Activated CD4-positive, alpha-beta T cell treated with anti-CD3 and anti-CD28 coated beads, Interleukin-2, amount 10 ng/mL, durations not matched to agents 7 days and 5 days (primary cell): ENCODE measurements at regions of chr6 and their contacts with region 1.

Region 1: DNA sequence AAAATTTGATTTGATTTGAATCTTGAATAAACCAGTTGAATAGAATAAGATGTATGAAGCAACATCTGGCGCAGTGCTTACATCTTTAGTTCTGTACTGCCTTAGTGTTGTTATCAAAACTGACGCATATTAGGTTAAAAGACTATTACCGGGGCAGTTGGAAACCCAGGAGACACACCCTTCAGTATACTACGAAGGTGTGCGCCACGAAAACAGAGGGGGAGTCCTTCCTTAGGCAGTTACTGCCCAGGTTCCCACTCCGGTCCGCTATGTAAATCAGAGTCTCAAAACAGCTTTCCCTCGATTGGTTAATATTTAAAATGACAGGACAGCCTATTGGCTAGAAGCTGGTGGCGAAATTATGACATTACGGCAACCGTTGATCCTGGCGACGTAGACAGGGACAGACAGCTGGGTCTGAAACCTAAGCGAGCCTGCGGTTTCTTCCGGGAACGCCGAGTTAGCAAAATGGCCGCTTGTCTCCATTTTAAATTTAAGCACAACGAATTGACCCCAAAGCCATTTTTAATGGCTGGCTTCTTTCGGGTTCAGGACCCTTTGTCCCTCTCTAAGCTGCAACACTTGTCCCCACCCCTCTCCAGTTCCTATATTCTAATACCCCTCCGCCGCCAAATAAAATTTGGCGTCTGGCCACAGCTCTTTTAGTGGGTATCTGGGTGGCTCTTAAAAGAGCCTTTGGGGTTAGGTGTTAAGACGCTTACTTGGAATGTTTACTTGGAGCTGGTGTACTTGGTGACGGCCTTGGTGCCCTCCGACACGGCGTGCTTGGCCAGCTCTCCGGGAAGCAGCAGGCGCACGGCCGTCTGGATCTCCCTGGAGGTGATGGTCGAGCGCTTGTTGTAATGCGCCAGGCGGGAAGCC is 35.8 kb downstream of the HFE start:
- DNase-seq: peak; percentile 98
- H3K4me3 Mint-ChIP-seq: peak overlapping the region; percentile 100
- H3K27ac Mint-ChIP-seq: peak overlapping the region; percentile 99
- H3K4me1 Mint-ChIP-seq: peaks cover 35% of the 10 kb centered on the region
- H3K27me3 Mint-ChIP-seq: peaks cover 4% of the 10 kb centered on the region

Region 2: DNA sequence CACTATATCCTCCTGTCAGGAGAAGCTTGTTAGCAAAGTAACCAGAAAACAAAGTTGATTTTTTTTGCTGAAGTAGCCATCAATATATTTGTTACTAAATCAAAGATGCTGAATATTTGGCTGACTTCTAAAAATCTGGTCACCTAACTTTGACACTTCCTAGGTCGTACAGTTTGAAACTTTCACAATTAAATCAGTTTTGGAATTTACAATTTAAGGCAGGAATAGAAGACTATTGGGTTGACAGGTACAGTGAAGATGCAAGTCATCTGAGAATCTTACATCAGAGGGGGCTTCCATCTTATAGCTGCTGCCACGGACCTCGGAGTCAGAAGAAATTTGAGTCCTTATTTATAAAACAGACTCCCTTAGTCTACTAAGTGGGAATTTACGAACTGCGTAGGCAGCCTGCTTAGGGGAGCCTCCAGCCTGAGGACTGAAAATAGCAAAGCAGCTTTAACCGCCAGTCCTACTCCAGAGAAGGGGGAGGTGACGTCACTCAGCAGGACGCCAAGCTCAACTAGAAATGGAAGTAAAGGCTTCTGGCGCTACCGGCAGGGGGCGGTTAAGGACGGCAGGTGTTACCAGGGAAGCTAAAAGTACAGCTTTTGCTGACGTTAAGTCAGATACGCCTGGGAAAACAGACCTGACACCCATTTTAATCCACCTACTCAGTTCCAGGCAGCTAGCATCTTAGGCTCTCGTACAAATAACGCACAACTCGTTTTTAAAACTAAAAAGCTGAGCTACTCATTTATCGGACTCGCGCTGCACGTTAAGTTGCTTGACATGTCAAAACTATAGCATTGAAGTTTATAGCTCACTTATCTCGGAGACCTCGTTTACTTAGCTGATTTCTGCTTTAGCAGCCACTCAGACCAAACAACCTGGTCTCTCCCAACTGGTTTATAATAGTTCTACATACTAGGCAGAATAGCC is 96.9 kb before region 1 on chr6:
- CTCF ChIA-PET with region 1: interaction called, 9 read pairs
- POLR2A ChIA-PET with region 1: interaction called, 59 read pairs
- DNase-seq: peak; percentile 96
- H3K4me3 Mint-ChIP-seq: peak overlapping the region; percentile 88
- H3K27ac Mint-ChIP-seq: peak overlapping the region; percentile 100
- H3K4me1 Mint-ChIP-seq: peaks cover 86% of the 10 kb centered on the region
- H3K27me3 Mint-ChIP-seq: peaks cover 3% of the 10 kb centered on the region

Region 3: DNA sequence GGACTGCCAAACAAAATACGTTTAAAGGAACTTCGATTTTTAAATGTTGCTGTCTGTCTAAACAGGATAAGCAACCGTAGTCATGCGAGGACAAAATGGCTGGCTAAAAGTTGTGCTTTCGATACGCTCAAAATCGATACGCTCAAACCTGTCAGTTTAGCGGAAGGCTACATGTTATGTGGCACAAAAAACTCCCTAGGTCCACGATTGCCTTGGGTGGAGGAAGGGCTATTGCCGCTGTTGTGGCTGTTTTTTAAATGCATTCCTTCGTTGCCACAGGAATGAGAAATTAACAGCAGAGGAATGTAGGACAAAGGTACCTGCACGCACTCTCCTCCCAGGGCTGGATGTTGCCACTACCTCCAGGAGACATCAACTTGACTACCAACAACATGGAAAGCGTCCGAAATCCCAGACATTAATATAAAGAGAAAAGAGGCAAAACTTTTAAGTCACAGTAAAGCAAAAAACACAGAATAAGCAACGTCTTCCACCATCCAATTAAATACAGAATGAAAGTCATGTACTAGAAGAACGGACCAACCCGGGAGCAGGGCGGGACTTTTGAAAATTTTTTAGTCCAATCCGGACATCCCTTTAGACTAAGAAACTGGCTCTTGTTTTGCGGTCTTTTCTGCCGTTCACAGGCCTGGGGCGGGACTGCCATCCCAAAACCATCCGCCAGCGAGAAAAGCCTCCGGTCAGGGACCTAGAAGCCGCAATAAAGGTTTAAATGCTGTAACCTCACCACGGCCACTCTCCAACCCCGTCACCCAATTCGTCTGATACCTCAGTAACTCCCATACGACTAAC is 68.0 kb before region 1 on chr6:
- CTCF ChIA-PET with region 1: interaction called, 6 read pairs
- POLR2A ChIA-PET with region 1: interaction called, 24 read pairs
- DNase-seq: peak; percentile 94
- H3K4me3 Mint-ChIP-seq: peak overlapping the region; percentile 87
- H3K27ac Mint-ChIP-seq: peak overlapping the region; percentile 99
- H3K4me1 Mint-ChIP-seq: peaks cover 40% of the 10 kb centered on the region
- H3K27me3 Mint-ChIP-seq: no peaks in the 10 kb centered on the region

Region 4: DNA sequence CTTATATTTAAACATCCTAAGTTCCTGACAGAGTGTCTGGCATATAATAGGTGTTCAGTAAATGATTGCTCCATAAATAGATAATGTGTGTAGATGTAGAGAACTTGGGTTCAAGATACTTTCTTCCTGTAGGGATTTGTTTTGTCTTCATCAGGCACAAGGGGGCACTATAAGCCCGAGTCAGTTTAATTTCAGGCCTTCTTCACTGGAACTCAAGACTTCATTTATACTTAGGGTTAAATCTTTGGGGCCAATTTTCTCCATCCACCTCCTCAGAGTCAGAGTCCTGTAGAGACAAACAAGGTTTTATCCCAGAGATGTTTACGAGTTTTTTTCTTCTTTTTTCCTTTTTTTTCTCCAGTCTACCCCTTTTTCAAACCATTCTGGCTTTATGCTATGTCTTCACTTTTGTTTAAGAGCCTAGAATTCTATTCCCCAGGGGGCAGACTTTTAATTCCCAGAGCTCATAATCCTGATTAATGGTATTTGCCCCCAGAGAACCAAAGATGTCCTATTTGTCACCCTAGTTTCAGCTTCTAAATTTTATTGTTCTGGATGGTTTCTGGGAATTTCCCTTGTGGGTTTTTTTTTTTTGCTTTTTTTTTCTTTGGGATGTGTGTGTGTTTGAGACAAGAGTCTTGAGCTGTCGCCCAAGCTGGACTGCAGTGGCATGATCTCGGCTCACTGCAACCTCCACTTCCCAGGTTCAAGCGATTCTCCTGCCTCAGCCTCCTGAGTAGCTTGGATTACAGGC is 52.6 kb after region 1 on chr6:
- CTCF ChIA-PET with region 1: interaction called, 3 read pairs
- POLR2A ChIA-PET with region 1: interaction called, 24 read pairs
- DNase-seq: peak; percentile 81
- H3K4me3 Mint-ChIP-seq: peak overlapping the region; percentile 54
- H3K27ac Mint-ChIP-seq: peak overlapping the region; percentile 75
- H3K4me1 Mint-ChIP-seq: peaks cover 50% of the 10 kb centered on the region
- H3K27me3 Mint-ChIP-seq: no peaks in the 10 kb centered on the region

Region 5: DNA sequence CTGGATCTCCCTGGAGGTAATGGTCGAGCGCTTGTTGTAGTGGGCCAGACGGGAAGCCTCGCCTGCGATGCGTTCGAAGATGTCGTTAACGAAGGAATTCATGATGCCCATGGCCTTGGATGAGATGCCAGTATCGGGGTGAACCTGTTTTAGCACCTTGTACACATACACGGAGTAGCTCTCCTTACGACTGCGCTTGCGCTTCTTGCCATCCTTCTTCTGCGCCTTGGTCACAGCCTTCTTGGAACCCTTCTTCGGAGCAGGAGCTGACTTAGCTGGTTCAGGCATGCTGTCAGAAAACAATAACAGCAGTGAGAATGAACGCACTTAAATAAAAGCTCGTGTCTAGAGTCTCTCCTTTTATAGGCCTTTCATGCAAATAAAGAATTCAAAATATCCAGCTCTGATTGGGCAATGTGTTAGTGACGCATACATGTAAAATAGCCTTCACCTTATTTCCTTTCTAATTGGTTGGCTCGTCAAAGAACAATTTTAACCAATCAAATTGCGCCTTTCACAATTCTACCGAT is 93.4 kb after region 1 on chr6:
- CTCF ChIA-PET with region 1: interaction called, 4 read pairs
- POLR2A ChIA-PET with region 1: interaction called, 53 read pairs
- DNase-seq: peak; percentile 92
- H3K4me3 Mint-ChIP-seq: no peak overlapping the region
- H3K27ac Mint-ChIP-seq: no peak overlapping the region
- H3K4me1 Mint-ChIP-seq: peaks cover 39% of the 10 kb centered on the region
- H3K27me3 Mint-ChIP-seq: no peaks in the 10 kb centered on the region

Region 6: GRCh38 chr6:26270903-26271667 is 148.1 kb after region 1 on chr6:
- CTCF ChIA-PET with region 1: no interaction called
- POLR2A ChIA-PET with region 1: interaction called, 21 read pairs
- DNase-seq: peak; percentile 91
- H3K4me3 Mint-ChIP-seq: no peak overlapping the region
- H3K27ac Mint-ChIP-seq: no peak overlapping the region
- H3K4me1 Mint-ChIP-seq: peaks cover 32% of the 10 kb centered on the region
- H3K27me3 Mint-ChIP-seq: no peaks in the 10 kb centered on the region

Region 7: GRCh38 chr6:27864906-27865849 is 1742.1 kb after region 1 on chr6:
- CTCF ChIA-PET with region 1: no interaction called
- POLR2A ChIA-PET with region 1: interaction called, 10 read pairs
- DNase-seq: peak; percentile 88
- H3K4me3 Mint-ChIP-seq: peak overlapping the region; percentile 99
- H3K27ac Mint-ChIP-seq: peak overlapping the region; percentile 100
- H3K4me1 Mint-ChIP-seq: peaks cover 65% of the 10 kb centered on the region
- H3K27me3 Mint-ChIP-seq: no peaks in the 10 kb centered on the region